GM12878 (cell line): ENCODE measurements at regions of chr4 and their contacts with region 1.

Region 1: GRCh38 chr4:105544520-105545286 is 7.7 kb upstream of the ARHGEF38 start:
- DNase-seq: no peak
- ATAC-seq: no peak
- H3K4me3 ChIP-seq: no peak overlapping the region
- H3K27ac ChIP-seq: no peak overlapping the region
- H3K4me1 ChIP-seq: no peaks in the 10 kb centered on the region
- H3K27me3 ChIP-seq: no peaks in the 10 kb centered on the region
- CTCF ChIP-seq: no peak
- EP300 ChIP-seq: no peak
- POLR2A ChIP-seq: no peak
- RAD21 ChIP-seq: no peak

Region 2: GRCh38 chr4:105555409-105555808 is 10.7 kb after region 1 on chr4:
- CTCF ChIA-PET with region 1: interaction called, 3 read pairs
- POLR2A ChIA-PET with region 1: no interaction called
- RAD21 ChIA-PET with region 1: no interaction called
- SMC1A ChIA-PET with region 1: interaction called, 12 read pairs
- in situ Hi-C with region 1: no loop called
- intact Hi-C with region 1: no loop called
- DNase-seq: no peak
- ATAC-seq: no peak
- H3K4me3 ChIP-seq: no peak overlapping the region
- H3K27ac ChIP-seq: no peak overlapping the region
- H3K4me1 ChIP-seq: no peaks in the 10 kb centered on the region
- H3K27me3 ChIP-seq: no peaks in the 10 kb centered on the region
- CTCF ChIP-seq: no peak
- EP300 ChIP-seq: no peak
- POLR2A ChIP-seq: no peak
- RAD21 ChIP-seq: no peak